ENCODE measurements at regions of chr20 and their contacts with region 1.

Region 1: GRCh38 chr20:34312544-34313217 is 9.5 kb upstream of the AHCY start:
- DNase-seq: peak; percentile 79 to 90
- ATAC-seq: peak; percentile 92 to 94
- H3K4me3 ChIP-seq: peak overlapping the region; percentile 38
- H3K27ac ChIP-seq: peak overlapping the region; percentile 54 to 80
- H3K4me1 ChIP-seq: peaks cover 41% of the 10 kb centered on the region
- CTCF ChIP-seq: peak; percentile 100
- EP300 ChIP-seq: no peak
- POLR2A ChIP-seq: no peak
- RAD21 ChIP-seq: peak; percentile 100

Region 2: GRCh38 chr20:34350095-34350494 is 37.4 kb after region 1 on chr20:
- CTCF ChIA-PET with region 1: interaction called, 14 read pairs
- POLR2A ChIA-PET with region 1: interaction called, 9 read pairs
- DNase-seq: no peak
- ATAC-seq: peak in 1 of 2 experiments; percentile 23; a peak in 1 of 6 replicates
- H3K4me3 ChIP-seq: no peak overlapping the region
- H3K27ac ChIP-seq: peak overlapping the region in 1 of 2 experiments; percentile 36; a peak in 3 of 6 replicates
- H3K4me1 ChIP-seq: peaks cover 14% of the 10 kb centered on the region
- CTCF ChIP-seq: no peak
- EP300 ChIP-seq: no peak
- POLR2A ChIP-seq: no peak
- RAD21 ChIP-seq: no peak

Region 3: GRCh38 chr20:34403908-34404307 is 91.2 kb after region 1 on chr20:
- CTCF ChIA-PET with region 1: interaction called, 58 read pairs
- POLR2A ChIA-PET with region 1: no interaction called
- DNase-seq: no peak
- ATAC-seq: no peak
- H3K4me3 ChIP-seq: no peak overlapping the region
- H3K27ac ChIP-seq: no peak overlapping the region
- H3K4me1 ChIP-seq: peaks cover 46% of the 10 kb centered on the region
- CTCF ChIP-seq: no peak
- EP300 ChIP-seq: no peak
- POLR2A ChIP-seq: no peak
- RAD21 ChIP-seq: no peak

Region 4: DNA sequence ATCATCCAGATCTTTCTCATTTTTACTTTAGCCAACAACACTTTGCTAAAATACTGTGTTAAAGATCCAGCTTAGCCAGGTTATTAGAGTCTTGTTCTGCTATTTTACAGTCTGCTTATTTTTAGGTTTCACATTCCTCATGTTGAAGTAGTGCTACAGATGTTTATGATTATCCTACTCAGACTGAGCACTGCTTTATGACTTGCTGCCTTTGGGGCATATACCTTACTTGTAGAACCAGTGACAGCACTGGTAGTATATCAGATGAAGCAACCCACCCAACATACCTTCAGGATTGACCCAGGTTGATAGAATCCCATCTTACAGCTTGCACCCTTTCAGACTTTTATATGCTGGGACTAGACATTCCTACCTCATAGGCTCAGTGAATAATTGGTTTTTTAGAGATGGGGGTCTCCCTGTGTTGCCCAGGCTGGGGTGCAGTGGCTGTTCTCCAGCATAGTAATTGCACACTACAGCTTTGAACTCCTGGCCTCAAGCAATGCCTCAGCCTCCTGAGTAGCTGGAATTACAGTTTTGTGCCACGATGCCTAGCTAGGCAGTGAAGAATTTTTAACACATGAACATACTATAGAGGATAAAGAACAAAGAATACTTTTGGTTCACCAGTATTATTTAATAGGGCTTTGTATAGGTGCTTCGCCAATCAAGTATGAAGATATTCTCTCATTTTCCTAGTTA is 139.8 kb after region 1 on chr20:
- CTCF ChIA-PET with region 1: interaction called, 33 read pairs
- POLR2A ChIA-PET with region 1: no interaction called
- DNase-seq: no peak
- ATAC-seq: no peak
- H3K4me3 ChIP-seq: no peak overlapping the region
- H3K27ac ChIP-seq: no peak overlapping the region
- H3K4me1 ChIP-seq: no peaks in the 10 kb centered on the region
- CTCF ChIP-seq: no peak
- EP300 ChIP-seq: no peak
- POLR2A ChIP-seq: no peak
- RAD21 ChIP-seq: no peak

Region 5: GRCh38 chr20:34506480-34506879 is 193.8 kb after region 1 on chr20:
- CTCF ChIA-PET with region 1: interaction called, 13 read pairs
- POLR2A ChIA-PET with region 1: no interaction called
- DNase-seq: no peak
- ATAC-seq: no peak
- H3K4me3 ChIP-seq: no peak overlapping the region
- H3K27ac ChIP-seq: no peak overlapping the region
- H3K4me1 ChIP-seq: no peaks in the 10 kb centered on the region
- CTCF ChIP-seq: no peak
- EP300 ChIP-seq: no peak
- POLR2A ChIP-seq: no peak
- RAD21 ChIP-seq: no peak

Region 6: DNA sequence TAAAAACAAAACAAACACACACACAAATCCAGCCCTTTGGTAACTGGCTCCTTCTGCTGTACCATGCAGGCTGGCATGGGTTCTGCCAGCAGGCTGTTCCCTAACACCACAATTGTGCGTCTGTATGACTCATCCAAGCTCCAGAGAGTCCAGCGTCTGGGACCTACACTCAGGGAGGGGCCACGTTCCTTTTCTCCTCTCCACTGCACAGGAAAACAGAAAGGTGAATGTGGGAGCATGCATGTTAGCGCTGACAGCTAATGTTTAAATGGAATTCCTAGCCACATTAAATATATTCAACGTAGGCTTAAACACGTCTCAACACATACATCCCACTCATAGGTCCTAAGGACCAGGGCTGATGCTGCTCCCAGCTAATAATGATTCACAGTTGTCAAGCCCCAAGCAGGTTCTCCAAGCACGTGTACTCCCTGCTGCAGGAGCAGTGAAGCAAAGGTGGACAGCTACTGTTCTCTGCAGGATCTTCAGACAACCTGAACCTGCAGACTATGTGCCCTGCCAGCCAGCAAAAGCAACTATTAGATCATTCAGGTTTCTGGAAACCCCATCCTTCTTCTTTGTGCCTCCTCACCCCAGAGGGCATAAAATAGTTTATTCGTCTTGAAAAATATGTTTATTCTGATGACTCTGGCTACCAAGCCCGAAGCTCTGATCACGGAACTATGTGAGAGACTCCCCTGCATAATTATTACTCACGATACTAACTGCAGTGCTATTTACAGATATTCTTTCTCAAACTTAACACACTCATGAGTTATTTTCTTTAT is 266.7 kb after region 1 on chr20:
- CTCF ChIA-PET with region 1: interaction called, 10 read pairs
- POLR2A ChIA-PET with region 1: no interaction called
- DNase-seq: peak in 1 of 2 experiments; percentile 69
- ATAC-seq: peak; percentile 91 to 96
- H3K4me3 ChIP-seq: no peak overlapping the region
- H3K27ac ChIP-seq: no peak overlapping the region
- H3K4me1 ChIP-seq: peaks cover 15% of the 10 kb centered on the region; the same call in 2 of the 3 replicates
- CTCF ChIP-seq: peak; percentile 82
- EP300 ChIP-seq: no peak
- POLR2A ChIP-seq: no peak
- RAD21 ChIP-seq: peak; percentile 93 to 94